ENCODE measurements at regions of chr6 and their contacts with region 1.

Region 1: GRCh38 chr6:37592085-37592698 is 92.5 kb upstream of the CCDC167 start:
- DNase-seq: no peak
- H3K4me3 ChIP-seq: no peak overlapping the region
- H3K27me3 ChIP-seq: peaks cover 22% of the 10 kb centered on the region
- CTCF ChIP-seq: no peak

Region 2: GRCh38 chr6:37257634-37258404 is 334.4 kb before region 1 on chr6 and contains the starts of genes TBC1D22B and TMEM217:
- CTCF ChIA-PET with region 1: no interaction called
- POLR2A ChIA-PET with region 1: no interaction called
- DNase-seq: peak; percentile 64
- H3K4me3 ChIP-seq: peak within 1 kb of the TSS; percentile 82
- H3K27me3 ChIP-seq: no peaks in the 10 kb centered on the region
- CTCF ChIP-seq: no peak
- polyA plus RNA-seq, gene TBC1D22B: 4.4 and 5.5 TPM in 2 replicates
- polyA plus RNA-seq, gene TMEM217: 2.3 and 3.1 TPM in 2 replicates

Region 3: GRCh38 chr6:37473397-37474095 is 118.6 kb before region 1 on chr6:
- CTCF ChIA-PET with region 1: no interaction called
- POLR2A ChIA-PET with region 1: no interaction called
- DNase-seq: no peak
- H3K4me3 ChIP-seq: no peak overlapping the region
- H3K27me3 ChIP-seq: no peaks in the 10 kb centered on the region
- CTCF ChIP-seq: no peak

Region 4: DNA sequence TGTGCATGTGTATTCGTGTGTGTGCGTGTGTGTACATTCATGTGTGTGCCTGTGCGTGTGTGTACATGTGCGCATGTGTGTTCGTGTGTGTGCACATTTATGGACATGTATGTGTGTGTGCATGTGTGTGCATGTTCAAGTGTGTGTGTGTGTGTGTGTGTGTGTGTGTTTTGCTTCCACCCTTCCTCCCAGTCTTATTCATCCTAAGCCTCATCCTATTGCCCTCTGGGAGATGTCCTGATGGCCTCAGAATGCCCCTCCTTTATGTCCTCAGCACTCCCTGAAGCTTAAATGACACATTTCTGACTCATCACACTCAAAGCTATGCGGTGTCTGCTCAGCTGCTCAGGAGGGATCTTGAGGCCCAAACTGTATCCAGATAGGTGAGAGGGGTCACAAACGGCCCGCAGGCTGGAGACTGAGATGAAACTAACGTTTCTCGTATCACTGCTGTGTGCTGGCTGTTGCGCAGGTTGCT is 15.8 kb before region 1 on chr6:
- CTCF ChIA-PET with region 1: interaction called, 10 read pairs
- POLR2A ChIA-PET with region 1: interaction called, 6 read pairs
- DNase-seq: peak; percentile 41
- H3K4me3 ChIP-seq: no peak overlapping the region
- H3K27me3 ChIP-seq: no peaks in the 10 kb centered on the region
- CTCF ChIP-seq: no peak

Measured in BJ (cell line).